PC-9 (cell line): ENCODE measurements at regions of chr7 and their contacts with region 1.

Region 1: DNA sequence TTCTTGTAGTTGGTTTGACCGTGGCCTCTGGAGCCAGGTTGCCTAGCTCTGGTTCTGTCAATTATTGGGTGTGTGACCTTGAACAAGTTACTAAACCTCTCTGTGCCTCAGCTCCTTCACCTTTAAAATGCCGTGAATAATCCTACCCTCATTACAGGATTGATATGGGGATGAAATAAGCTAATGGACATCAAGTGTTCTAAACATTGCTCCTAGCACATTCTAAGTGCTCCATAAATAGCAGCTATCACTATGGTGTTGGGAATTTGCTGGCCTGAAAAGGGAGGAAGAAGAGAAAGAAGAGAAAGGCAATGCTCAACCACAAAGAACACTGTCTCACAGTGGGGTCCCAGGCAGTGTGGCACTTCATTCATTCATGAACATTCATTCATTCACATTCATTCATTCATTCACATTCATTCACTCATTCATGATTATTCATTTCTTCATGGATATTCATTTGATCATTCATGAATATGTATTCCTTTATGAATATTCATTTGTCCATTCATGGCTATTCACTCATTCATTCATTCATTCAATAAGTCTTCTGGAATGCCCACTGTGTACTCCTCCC is 38.8 kb downstream of the TMEM130 start:
- DNase-seq: no peak
- H3K4me3 ChIP-seq: no peak overlapping the region
- H3K27ac ChIP-seq: no peak overlapping the region
- H3K4me1 ChIP-seq: no peaks in the 10 kb centered on the region
- H3K27me3 ChIP-seq: no peaks in the 10 kb centered on the region
- CTCF ChIP-seq: no peak

Region 2: GRCh38 chr7:98788966-98789365 is 42.1 kb before region 1 on chr7:
- CTCF ChIA-PET with region 1: no interaction called
- POLR2A ChIA-PET with region 1: no interaction called
- intact Hi-C with region 1: no loop called
- DNase-seq: no peak
- H3K4me3 ChIP-seq: no peak overlapping the region
- H3K27ac ChIP-seq: no peak overlapping the region
- H3K4me1 ChIP-seq: no peaks in the 10 kb centered on the region
- H3K27me3 ChIP-seq: no peaks in the 10 kb centered on the region
- CTCF ChIP-seq: no peak

Region 3: DNA sequence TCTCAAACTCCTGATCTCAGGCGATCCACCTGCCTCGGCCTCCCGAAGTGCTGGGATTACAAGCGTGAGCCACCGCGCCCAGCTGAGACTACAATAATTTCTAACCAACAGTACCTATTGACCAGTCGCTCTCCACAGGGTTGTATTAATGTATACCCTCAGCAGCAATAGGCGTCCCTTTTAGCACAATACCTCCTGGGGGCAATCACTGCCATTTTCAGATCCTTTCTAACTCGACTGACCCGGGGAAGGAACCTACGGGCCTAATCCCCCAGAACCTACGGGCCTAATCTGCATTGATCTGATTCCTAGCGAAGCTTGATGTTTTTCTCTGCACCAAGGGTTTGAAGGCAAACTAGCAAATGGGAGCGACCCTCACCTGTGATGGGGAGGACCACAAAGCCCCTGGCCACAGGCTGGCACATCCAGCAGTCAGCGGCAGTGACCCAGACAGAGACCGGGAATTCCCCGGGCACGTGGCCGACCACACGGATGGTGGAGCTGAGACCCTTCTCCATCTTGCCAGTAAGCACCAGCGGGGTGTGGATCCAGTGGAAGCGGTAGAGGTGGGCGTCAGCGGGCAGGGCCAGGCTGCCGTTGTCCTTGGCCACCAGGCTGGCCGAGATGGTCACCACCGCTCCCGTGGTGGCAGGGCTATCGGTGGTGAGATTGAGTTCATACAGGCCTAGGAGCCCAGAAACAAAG is 31.8 kb after region 1 on chr7:
- CTCF ChIA-PET with region 1: interaction called, 11 read pairs
- POLR2A ChIA-PET with region 1: no interaction called
- intact Hi-C with region 1: no loop called
- DNase-seq: no peak
- H3K4me3 ChIP-seq: no peak overlapping the region
- H3K27ac ChIP-seq: no peak overlapping the region
- H3K4me1 ChIP-seq: peaks cover 19% of the 10 kb centered on the region
- H3K27me3 ChIP-seq: no peaks in the 10 kb centered on the region
- CTCF ChIP-seq: no peak